Activated CD8-positive, alpha-beta T cell treated with anti-CD3 and anti-CD28 coated beads, Interleukin-2, amount 10 ng/mL, durations not matched to agents 7 days and 5 days (primary cell): ENCODE measurements at regions of chr10 and their contacts with region 1.

Region 1: GRCh38 chr10:6202684-6203330 is at the start of gene PFKFB3:
- DNase-seq: peak; percentile 95
- ATAC-seq: peak; percentile 66
- H3K4me3 Mint-ChIP-seq: peak within 1 kb of the TSS; percentile 100
- H3K27ac Mint-ChIP-seq: peak within 1 kb of the TSS; percentile 96
- H3K4me1 Mint-ChIP-seq: peaks cover 44% of the 10 kb centered on the region
- H3K27me3 Mint-ChIP-seq: no peaks in the 10 kb centered on the region
- total RNA-seq, gene PFKFB3: 93.0 to 97.3 TPM

Region 2: GRCh38 chr10:6136215-6137201 is 66.3 kb before region 1 on chr10:
- CTCF ChIA-PET with region 1: interaction called, 13 read pairs
- POLR2A ChIA-PET with region 1: interaction called, 6 read pairs
- DNase-seq: no peak
- ATAC-seq: peak; percentile 35
- H3K4me3 Mint-ChIP-seq: no peak overlapping the region
- H3K27ac Mint-ChIP-seq: no peak overlapping the region
- H3K4me1 Mint-ChIP-seq: peaks cover 44% of the 10 kb centered on the region
- H3K27me3 Mint-ChIP-seq: peaks cover 3% of the 10 kb centered on the region

Region 3: GRCh38 chr10:6163364-6164270 is 39.2 kb before region 1 on chr10:
- CTCF ChIA-PET with region 1: interaction called, 10 read pairs
- POLR2A ChIA-PET with region 1: interaction called, 15 read pairs
- DNase-seq: peak; percentile 93
- ATAC-seq: peak; percentile 97
- H3K4me3 Mint-ChIP-seq: peak overlapping the region; percentile 96
- H3K27ac Mint-ChIP-seq: peak overlapping the region; percentile 98
- H3K4me1 Mint-ChIP-seq: peaks cover 39% of the 10 kb centered on the region
- H3K27me3 Mint-ChIP-seq: no peaks in the 10 kb centered on the region

Region 4: GRCh38 chr10:6228010-6228511 is 25.3 kb after region 1 on chr10:
- CTCF ChIA-PET with region 1: no interaction called
- POLR2A ChIA-PET with region 1: no interaction called
- DNase-seq: no peak
- ATAC-seq: no peak
- H3K4me3 Mint-ChIP-seq: no peak overlapping the region
- H3K27ac Mint-ChIP-seq: peak overlapping the region; percentile 31
- H3K4me1 Mint-ChIP-seq: peaks cover 26% of the 10 kb centered on the region
- H3K27me3 Mint-ChIP-seq: no peaks in the 10 kb centered on the region

Region 5: DNA sequence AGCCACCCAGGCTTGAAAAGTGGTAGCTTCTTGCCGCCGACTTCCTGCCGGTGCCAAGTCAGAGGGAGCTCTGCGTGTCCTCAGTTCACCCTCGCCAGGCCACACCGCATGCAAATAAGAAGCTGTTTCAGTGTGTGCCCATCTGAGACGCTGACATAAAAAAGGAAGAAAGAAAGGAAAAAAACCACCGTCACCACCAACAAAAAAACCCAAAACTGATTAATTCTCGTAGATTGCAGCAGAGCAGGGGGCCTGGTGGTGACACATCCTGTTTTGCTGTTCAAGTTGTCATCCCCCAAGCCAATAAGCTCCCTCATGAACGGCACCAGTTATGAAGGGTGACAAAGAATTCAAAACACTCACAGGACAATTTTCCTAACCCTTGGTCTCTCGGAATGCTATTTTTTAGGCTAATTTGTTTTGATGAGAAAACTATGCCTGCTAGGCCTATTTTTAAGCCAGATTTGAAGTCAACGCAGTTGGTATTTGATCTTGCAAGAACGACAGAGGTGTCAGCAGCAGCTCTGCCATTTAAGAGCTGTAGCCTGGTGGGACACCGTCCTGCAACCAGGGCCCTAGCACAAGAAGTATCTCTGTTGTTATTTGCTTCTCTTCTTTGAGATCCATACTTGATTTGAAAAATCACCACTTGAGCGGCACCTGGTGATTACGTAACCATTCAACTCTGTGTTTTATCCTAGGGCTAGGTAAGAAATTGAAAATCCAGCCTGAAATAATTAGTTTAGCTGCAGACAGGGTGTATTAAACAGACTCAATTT is 145.5 kb after region 1 on chr10:
- CTCF ChIA-PET with region 1: interaction called, 50 read pairs
- POLR2A ChIA-PET with region 1: interaction called, 23 read pairs
- DNase-seq: peak; percentile 91
- ATAC-seq: peak; percentile 94
- H3K4me3 Mint-ChIP-seq: peak overlapping the region; percentile 63
- H3K27ac Mint-ChIP-seq: peak overlapping the region; percentile 98
- H3K4me1 Mint-ChIP-seq: peaks cover 66% of the 10 kb centered on the region
- H3K27me3 Mint-ChIP-seq: no peaks in the 10 kb centered on the region

Region 6: GRCh38 chr10:6388261-6388893 is 185.6 kb after region 1 on chr10:
- CTCF ChIA-PET with region 1: interaction called, 13 read pairs
- POLR2A ChIA-PET with region 1: interaction called, 4 read pairs
- DNase-seq: no peak
- ATAC-seq: no peak
- H3K4me3 Mint-ChIP-seq: no peak overlapping the region
- H3K27ac Mint-ChIP-seq: no peak overlapping the region
- H3K4me1 Mint-ChIP-seq: peaks cover 9% of the 10 kb centered on the region
- H3K27me3 Mint-ChIP-seq: no peaks in the 10 kb centered on the region